Activated T-helper 1 cell treated with anti-CD3 and anti-CD28 coated beads, Interleukin-12 subunit alpha, Interleukin-12 subunit beta, Interleukin-2, Interleukin-4 antibody, amounts not matched to agents 30 ng/mL and 10 ng/mL and 1 ng/mL, durations not matched to agents 14 hours and 24 hours and 36 hours (primary cell): ENCODE measurements at regions of chr1 and their contacts with region 1.

Region 1: DNA sequence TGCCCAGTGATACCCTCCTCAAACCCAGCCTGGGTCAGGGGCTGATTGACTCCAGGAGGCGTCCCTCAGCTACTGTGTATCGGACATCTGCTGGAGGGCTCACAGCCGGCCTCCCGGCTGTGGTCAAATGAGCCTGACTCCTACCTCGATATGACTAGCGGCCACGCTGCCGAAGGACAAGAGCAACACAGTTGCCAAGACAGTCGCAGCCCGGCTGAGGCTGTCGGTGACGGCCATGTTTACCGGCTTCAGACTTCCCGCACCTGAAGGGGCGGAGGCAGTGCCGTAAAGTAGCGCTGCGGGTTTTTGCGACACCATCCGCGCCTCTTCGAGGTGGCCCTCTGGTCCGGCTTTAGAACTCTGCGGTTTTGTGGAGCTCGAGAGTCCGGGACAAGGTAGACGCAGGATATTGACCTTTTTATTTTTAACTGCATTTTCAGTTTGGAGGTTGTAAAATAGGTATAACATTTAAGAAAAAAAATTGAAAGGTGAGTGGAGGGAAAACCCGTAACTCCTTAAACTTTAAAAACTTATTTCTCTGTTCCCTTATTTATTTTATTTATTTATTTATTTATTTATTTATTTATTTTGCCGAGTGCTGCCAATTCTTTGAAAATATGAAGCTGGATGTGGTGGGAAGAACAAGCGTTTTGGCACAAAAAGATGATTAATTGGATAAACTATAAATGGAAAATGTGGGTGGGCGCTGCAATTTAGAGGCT is at the start of gene PIGK:
- DNase-seq: peak; percentile 85
- H3K4me3 Mint-ChIP-seq: peak within 1 kb of the TSS; percentile 92
- H3K27ac Mint-ChIP-seq: peak within 1 kb of the TSS; percentile 84
- H3K4me1 Mint-ChIP-seq: peaks cover 26% of the 10 kb centered on the region
- H3K27me3 Mint-ChIP-seq: no peaks in the 10 kb centered on the region
- total RNA-seq, gene PIGK: 15.9 and 19.4 TPM in 2 replicates

Region 2: GRCh38 chr1:75724472-75725022 is 1494.8 kb before region 1 on chr1 and contains the start of gene ACADM:
- intact Hi-C with region 1: loop called (anchors 5 kb)
- DNase-seq: peak; percentile 84
- H3K4me3 Mint-ChIP-seq: peak within 1 kb of the TSS; percentile 100
- H3K27ac Mint-ChIP-seq: peak within 1 kb of the TSS; percentile 97
- H3K4me1 Mint-ChIP-seq: peaks cover 30% of the 10 kb centered on the region
- H3K27me3 Mint-ChIP-seq: no peaks in the 10 kb centered on the region
- total RNA-seq, gene ACADM: 53.2 and 54.8 TPM in 2 replicates

Region 3: DNA sequence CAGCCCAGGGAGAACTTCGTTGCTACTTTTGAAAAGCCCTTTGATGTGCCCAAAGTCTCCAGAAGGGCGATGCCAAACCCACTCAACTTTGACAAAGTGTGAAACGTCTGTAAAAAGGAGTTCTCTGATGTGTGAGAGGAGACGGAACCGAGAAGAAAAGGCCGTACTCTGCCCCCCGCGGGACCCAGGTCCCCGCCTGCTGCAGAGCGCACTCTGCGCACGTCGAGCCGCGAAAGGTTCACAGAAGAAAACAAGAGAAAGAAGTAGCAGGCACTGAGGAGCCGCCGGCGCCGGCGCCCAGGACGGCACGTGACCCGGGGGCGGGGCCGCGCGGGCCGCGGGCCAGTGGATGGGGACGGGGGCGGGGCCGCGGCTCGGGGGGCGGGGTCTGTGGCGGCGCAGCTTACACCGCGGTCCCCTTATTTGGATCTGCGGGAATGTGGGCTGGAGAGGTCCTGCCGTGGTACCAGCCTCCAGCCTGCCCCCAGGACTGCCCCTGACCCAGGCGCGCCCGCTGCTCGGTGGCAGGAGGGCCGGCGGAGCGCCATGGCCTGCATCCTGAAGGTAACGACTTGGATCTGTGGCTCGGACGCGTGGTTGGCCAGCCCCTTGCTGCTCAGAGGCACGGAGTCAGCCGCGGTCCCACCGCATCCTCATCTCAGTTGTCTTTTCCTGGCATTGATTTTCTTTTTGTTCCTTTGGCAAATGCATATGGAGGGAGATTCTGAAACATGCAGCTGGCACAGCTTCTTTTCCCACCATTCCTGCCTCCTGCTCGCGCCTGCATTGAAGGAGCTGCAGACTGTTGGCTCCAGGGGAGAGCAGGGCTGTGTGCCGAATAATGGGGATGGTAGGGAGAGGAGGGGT is 1144.8 kb before region 1 on chr1 and contains the start of gene ST6GALNAC3:
- intact Hi-C with region 1: loop called (anchors 2 kb)
- DNase-seq: peak; percentile 71
- H3K4me3 Mint-ChIP-seq: peak within 1 kb of the TSS; percentile 84
- H3K27ac Mint-ChIP-seq: peak within 1 kb of the TSS; percentile 49
- H3K4me1 Mint-ChIP-seq: peaks cover 10% of the 10 kb centered on the region
- H3K27me3 Mint-ChIP-seq: peaks cover 25% of the 10 kb centered on the region
- total RNA-seq, gene ST6GALNAC3: not detected in 2 replicates

Region 4: DNA sequence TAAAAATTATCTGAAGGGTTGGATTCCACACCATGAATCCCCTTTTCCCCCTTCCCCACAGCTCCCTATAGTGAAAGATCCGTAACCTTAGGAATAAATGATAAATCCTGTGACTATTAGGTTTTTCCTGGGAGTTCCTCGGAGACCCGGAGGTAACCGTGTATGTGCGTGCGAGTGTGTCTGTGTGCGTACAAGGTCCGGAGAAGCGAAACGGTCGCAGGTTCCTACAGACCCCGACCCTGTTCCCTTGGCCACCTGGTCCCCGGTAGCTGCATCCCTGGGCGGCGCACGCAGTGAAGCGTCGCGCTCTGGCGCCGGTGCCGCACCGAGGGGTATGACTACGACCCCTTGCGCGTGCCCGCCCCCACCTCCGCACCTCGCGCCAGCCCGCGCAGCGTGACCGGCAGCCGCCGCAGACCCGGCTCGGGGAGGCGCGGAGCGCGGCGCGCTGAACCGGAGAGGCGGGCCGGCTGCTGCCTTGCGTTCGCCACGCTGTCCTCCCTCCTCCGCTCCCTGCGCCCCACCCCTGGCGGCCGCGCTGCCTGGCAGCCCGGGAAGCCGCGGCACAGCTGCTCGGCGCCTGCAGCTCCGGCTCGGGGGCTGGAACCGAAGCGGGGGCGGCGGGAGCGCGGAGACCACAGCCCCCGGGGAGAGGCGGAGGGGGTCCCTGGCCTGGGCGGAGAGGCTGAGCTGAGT is 62.3 kb after region 1 on chr1 and contains the start of gene AK5:
- intact Hi-C with region 1: loop called (anchors 2 kb)
- DNase-seq: peak; percentile 16
- H3K4me3 Mint-ChIP-seq: peak within 1 kb of the TSS; percentile 63
- H3K27ac Mint-ChIP-seq: no peak within 1 kb of the TSS
- H3K4me1 Mint-ChIP-seq: peaks cover 28% of the 10 kb centered on the region
- H3K27me3 Mint-ChIP-seq: peaks cover 20% of the 10 kb centered on the region
- total RNA-seq, gene AK5: 0.39 TPM in 1 of 2 replicates, not detected in the other

Region 5: GRCh38 chr1:77333501-77333900 is 114.2 kb after region 1 on chr1:
- intact Hi-C with region 1: no loop called
- DNase-seq: no peak
- H3K4me3 Mint-ChIP-seq: no peak overlapping the region
- H3K27ac Mint-ChIP-seq: no peak overlapping the region
- H3K4me1 Mint-ChIP-seq: no peaks in the 10 kb centered on the region
- H3K27me3 Mint-ChIP-seq: no peaks in the 10 kb centered on the region

Region 6: GRCh38 chr1:77779529-77780281 is 560.4 kb after region 1 on chr1 and contains the start of gene MIGA1:
- intact Hi-C with region 1: loop called (anchors 2 kb)
- DNase-seq: peak; percentile 77
- H3K4me3 Mint-ChIP-seq: peak within 1 kb of the TSS; percentile 98
- H3K27ac Mint-ChIP-seq: peak within 1 kb of the TSS; percentile 87
- H3K4me1 Mint-ChIP-seq: peaks cover 39% of the 10 kb centered on the region
- H3K27me3 Mint-ChIP-seq: peaks cover 4% of the 10 kb centered on the region
- total RNA-seq, gene MIGA1: 8.0 and 8.6 TPM in 2 replicates